Endothelial cell of umbilical vein (primary cell): ENCODE measurements at regions of chr9 and their contacts with region 1.

Region 1: GRCh38 chr9:5532301-5532700 is 22.0 kb downstream of the PDCD1LG2 start:
- DNase-seq: no peak
- H3K4me3 ChIP-seq: no peak overlapping the region
- H3K27ac ChIP-seq: no peak overlapping the region
- H3K4me1 ChIP-seq: peaks cover 30% of the 10 kb centered on the region
- H3K27me3 ChIP-seq: no peaks in the 10 kb centered on the region
- CTCF ChIP-seq: no peak
- POLR2A ChIP-seq: no peak

Region 2: GRCh38 chr9:5288591-5288990 is 243.7 kb before region 1 on chr9:
- CTCF ChIA-PET with region 1: no interaction called
- POLR2A ChIA-PET with region 1: no interaction called
- dilution Hi-C with region 1: no loop called
- intact Hi-C with region 1: no loop called
- DNase-seq: no peak
- H3K4me3 ChIP-seq: no peak overlapping the region
- H3K27ac ChIP-seq: no peak overlapping the region
- H3K4me1 ChIP-seq: no peaks in the 10 kb centered on the region
- H3K27me3 ChIP-seq: peaks cover 2 to 3% of the 10 kb centered on the region in 2 experiments
- CTCF ChIP-seq: no peak
- POLR2A ChIP-seq: no peak

Region 3: GRCh38 chr9:5485378-5486085 is 46.8 kb before region 1 on chr9:
- CTCF ChIA-PET with region 1: no interaction called
- POLR2A ChIA-PET with region 1: no interaction called
- dilution Hi-C with region 1: no loop called
- intact Hi-C with region 1: no loop called
- DNase-seq: peak; percentile 16
- H3K4me3 ChIP-seq: no peak overlapping the region
- H3K27ac ChIP-seq: no peak overlapping the region
- H3K4me1 ChIP-seq: peaks cover 26% of the 10 kb centered on the region
- H3K27me3 ChIP-seq: no peaks in the 10 kb centered on the region
- CTCF ChIP-seq: no peak
- POLR2A ChIP-seq: no peak

Region 4: DNA sequence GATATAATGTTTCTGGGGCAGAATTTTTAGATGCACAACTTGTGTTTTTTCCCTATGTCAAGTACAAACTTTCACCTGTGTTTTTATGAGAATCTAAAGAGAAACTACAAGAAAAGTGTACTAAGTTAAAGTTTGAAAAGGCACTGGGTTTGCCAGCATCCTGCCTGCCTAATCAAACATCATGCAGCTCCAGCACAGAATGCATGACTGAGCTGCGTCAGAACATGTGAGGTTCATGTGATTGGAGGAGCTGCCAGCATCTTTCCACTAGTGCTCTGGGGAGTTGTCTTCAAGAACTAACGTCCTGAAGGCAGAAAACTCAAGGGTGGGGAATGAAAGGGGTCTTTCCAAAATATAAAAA is 50.5 kb after region 1 on chr9:
- CTCF ChIA-PET with region 1: interaction called, 4 read pairs
- POLR2A ChIA-PET with region 1: no interaction called
- dilution Hi-C with region 1: no loop called
- intact Hi-C with region 1: loop called (anchors 2 kb)
- DNase-seq: no peak
- H3K4me3 ChIP-seq: no peak overlapping the region
- H3K27ac ChIP-seq: peak overlapping the region; percentile 10
- H3K4me1 ChIP-seq: peaks cover 36% of the 10 kb centered on the region
- H3K27me3 ChIP-seq: no peaks in the 10 kb centered on the region
- CTCF ChIP-seq: no peak
- POLR2A ChIP-seq: no peak